Heart right ventricle (tissue), 16 donors: ENCODE measurements at regions of chr1 and their contacts with region 1.

Region 1: DNA sequence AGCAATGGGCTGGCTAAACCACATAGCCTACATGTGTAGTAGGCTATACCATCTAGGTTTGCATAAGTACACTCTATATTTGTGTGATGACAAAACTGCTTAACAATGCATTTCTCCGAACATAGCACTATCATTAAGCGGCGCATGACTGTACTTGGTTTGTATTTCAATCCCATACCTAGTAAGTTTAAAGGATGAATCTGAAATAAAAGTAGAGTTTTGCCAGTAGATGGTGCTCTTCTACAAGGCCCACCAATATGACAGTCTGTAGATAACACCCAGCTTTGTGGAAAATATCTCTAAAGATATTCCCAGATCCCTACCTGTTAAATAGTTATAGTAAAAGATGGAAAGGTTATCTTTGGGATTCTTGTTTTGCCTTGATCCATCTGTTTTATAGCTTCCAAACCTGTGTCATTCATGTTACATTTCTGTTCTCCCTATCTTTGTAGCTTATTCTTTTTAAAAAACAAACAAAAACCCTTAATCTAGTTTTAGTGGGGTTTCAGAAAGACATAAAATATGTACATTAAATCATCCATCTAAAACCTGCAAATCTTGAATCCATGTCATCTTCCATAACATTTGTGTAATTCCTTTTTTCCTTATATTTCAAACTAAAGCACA is 33.9 kb upstream of the ASPM start:
- DNase-seq: no peak
- ATAC-seq: peak in 4 of 8 donors; percentile 35 to 55 (median 48)
- H3K4me3 ChIP-seq: no peak overlapping the region
- H3K27ac ChIP-seq: no peak overlapping the region
- H3K4me1 ChIP-seq: peaks cover 0 to 6% (median 0%) of the 10 kb centered on the region in 9 donors
- H3K27me3 ChIP-seq: no peaks in the 10 kb centered on the region
- CTCF ChIP-seq: peak; percentile 39 to 81 (median 67)

Region 2: DNA sequence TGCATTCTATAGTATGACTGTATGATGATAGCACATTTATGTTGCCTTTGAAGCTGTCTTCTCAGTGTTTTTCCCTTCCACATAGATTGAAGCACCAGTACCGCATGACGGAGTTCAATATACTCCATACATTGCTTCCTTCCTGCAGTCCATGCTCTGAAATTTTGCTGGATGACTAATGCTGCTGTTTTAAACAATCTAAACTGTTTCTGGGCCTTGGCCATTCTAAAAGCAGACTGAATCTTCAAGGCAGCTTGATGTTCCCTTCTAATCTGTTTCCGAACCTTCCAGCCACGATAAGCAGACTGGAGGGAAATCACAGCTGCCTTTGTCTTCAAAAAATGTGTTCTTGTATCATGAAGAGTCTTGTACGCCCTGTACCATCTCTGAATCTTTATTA is 77.1 kb before region 1 on chr1:
- intact Hi-C with region 1: no loop called
- DNase-seq: no peak
- ATAC-seq: peak in 2 of 8 donors; percentile 35 to 41
- H3K4me3 ChIP-seq: no peak overlapping the region
- H3K27ac ChIP-seq: no peak overlapping the region
- H3K4me1 ChIP-seq: peaks cover 0 to 28% (median 10%) of the 10 kb centered on the region in 9 donors
- H3K27me3 ChIP-seq: no peaks in the 10 kb centered on the region
- CTCF ChIP-seq: no peak

Region 3: GRCh38 chr1:197224160-197224559 is 43.8 kb after region 1 on chr1:
- intact Hi-C with region 1: loop called in 1 of 10 experiments (anchors 5 kb)
- DNase-seq: no peak
- ATAC-seq: no peak
- H3K4me3 ChIP-seq: no peak overlapping the region
- H3K27ac ChIP-seq: no peak overlapping the region
- H3K4me1 ChIP-seq: no peaks in the 10 kb centered on the region
- H3K27me3 ChIP-seq: no peaks in the 10 kb centered on the region
- CTCF ChIP-seq: peak in 6 of 9 donors; percentile 27 to 48 (median 36)